ENCODE measurements at regions of chr6 and their contacts with region 1.

Region 1: GRCh38 chr6:142946181-142946923 is 1.4 kb upstream of the HIVEP2 start:
- DNase-seq: peak; percentile 93
- ATAC-seq: peak; percentile 28
- H3K4me3 ChIP-seq: peak overlapping the region; percentile 85 to 96 (median 90)
- H3K4me3 Mint-ChIP-seq: peak overlapping the region; percentile 99
- H3K27ac ChIP-seq: peak overlapping the region; percentile 100
- H3K27ac Mint-ChIP-seq: peak overlapping the region; percentile 99
- H3K4me1 ChIP-seq: peaks cover 19 to 29% of the 10 kb centered on the region in 2 donors
- H3K4me1 Mint-ChIP-seq: peaks cover 43% of the 10 kb centered on the region
- H3K27me3 ChIP-seq: no peaks in the 10 kb centered on the region
- H3K27me3 Mint-ChIP-seq: no peaks in the 10 kb centered on the region
- CTCF ChIP-seq: no peak

Region 2: DNA sequence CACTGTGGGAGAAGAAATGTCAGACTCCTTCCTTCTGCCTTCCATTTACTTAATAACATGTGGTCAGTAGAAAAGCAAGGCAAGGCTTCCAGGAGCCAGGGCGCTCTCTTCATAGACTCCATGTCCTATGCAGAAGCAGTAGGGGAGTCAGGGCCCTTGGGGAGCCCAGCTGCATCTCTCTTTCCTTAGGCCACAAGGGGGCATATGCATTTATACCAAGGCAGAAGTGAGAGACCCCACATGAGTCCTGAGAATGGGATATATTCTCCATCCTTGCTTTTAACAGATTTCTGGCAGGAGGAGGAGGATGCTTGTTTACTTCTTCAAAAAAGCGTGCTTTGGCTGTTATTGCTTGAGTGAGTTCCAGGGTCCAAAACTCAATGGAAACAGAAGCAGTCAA is 199.8 kb before region 1 on chr6:
- CTCF ChIA-PET with region 1: interaction called, 7 read pairs
- POLR2A ChIA-PET with region 1: no interaction called
- intact Hi-C with region 1: loop called (anchors 5 kb)
- DNase-seq: peak; percentile 70
- ATAC-seq: peak; percentile 56
- H3K4me3 ChIP-seq: no peak overlapping the region
- H3K4me3 Mint-ChIP-seq: no peak overlapping the region
- H3K27ac ChIP-seq: no peak overlapping the region
- H3K27ac Mint-ChIP-seq: no peak overlapping the region
- H3K4me1 ChIP-seq: peaks cover 0 to 5% of the 10 kb centered on the region in 2 donors
- H3K4me1 Mint-ChIP-seq: peaks cover 17% of the 10 kb centered on the region
- H3K27me3 ChIP-seq: no peaks in the 10 kb centered on the region
- H3K27me3 Mint-ChIP-seq: no peaks in the 10 kb centered on the region
- CTCF ChIP-seq: peak; percentile 69

Region 3: DNA sequence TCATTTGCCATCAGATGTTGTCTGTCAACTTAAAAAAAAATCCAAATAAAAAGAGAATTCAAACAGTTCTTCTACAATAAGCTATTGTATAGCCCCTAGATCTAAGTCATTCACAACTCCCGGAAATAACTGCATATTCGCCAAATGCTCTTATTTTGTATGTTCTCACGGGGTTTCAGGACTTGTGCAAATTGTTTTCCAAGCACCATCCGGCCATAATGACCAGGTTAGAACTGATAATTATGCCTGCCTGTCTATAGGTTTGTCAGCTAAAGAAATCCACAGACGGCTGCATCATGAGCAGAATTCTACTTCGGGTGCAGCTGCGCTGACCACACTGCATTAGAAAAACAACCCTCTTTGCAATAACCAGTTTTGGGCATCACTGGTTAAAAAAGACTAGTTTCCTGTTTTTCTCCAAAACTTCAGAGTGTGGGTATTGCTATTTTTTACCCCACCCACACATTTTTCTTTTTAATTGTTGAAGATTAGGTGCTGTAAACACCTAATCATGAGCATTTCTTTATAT is 89.1 kb before region 1 on chr6:
- CTCF ChIA-PET with region 1: interaction called, 3 read pairs
- POLR2A ChIA-PET with region 1: interaction called, 3 read pairs
- intact Hi-C with region 1: loop called (anchors 1 kb)
- DNase-seq: peak; percentile 61
- ATAC-seq: peak; percentile 67
- H3K4me3 ChIP-seq: peak overlapping the region; percentile 24 to 73 (median 52)
- H3K4me3 Mint-ChIP-seq: peak overlapping the region; percentile 83
- H3K27ac ChIP-seq: peak overlapping the region; percentile 83 to 84
- H3K27ac Mint-ChIP-seq: peak overlapping the region; percentile 94
- H3K4me1 ChIP-seq: peaks cover 69 to 77% of the 10 kb centered on the region in 2 donors
- H3K4me1 Mint-ChIP-seq: peaks cover 81% of the 10 kb centered on the region
- H3K27me3 ChIP-seq: no peaks in the 10 kb centered on the region
- H3K27me3 Mint-ChIP-seq: no peaks in the 10 kb centered on the region
- CTCF ChIP-seq: no peak

Region 4: GRCh38 chr6:142926494-142927270 is 19.7 kb before region 1 on chr6:
- CTCF ChIA-PET with region 1: interaction called, 7 read pairs
- POLR2A ChIA-PET with region 1: interaction called, 21 read pairs
- intact Hi-C with region 1: loop called (anchors 1 kb)
- DNase-seq: peak; percentile 88
- ATAC-seq: peak; percentile 92
- H3K4me3 ChIP-seq: peak overlapping the region; percentile 46 to 94 (median 75)
- H3K4me3 Mint-ChIP-seq: peak overlapping the region; percentile 98
- H3K27ac ChIP-seq: peak overlapping the region; percentile 98
- H3K27ac Mint-ChIP-seq: peak overlapping the region; percentile 96
- H3K4me1 ChIP-seq: peaks cover 16 to 37% of the 10 kb centered on the region in 2 donors
- H3K4me1 Mint-ChIP-seq: peaks cover 49% of the 10 kb centered on the region
- H3K27me3 ChIP-seq: no peaks in the 10 kb centered on the region
- H3K27me3 Mint-ChIP-seq: no peaks in the 10 kb centered on the region
- CTCF ChIP-seq: no peak

Region 5: DNA sequence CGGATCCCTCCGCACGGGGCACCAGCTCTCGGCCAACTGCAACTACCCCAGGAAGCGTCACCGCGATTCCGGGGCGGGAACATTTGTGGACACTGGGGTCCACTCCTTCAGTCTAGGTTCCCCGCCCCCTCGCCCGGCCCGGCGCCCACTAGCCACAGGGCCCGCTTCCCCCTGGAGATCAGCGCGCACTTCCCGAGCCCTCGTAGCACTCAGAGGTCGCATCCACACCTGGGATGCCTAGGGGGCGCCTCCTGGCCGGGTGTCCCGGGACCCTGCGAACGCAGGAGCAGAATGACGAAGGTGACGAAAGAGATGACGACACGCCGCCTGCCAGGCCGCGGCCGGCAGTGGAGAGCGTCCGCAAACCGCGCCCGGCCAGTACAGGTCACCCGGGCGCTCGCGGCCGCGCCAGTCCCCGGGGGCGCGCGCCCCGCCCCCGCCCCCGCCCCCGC is 114.0 kb after region 1 on chr6:
- CTCF ChIA-PET with region 1: no interaction called
- POLR2A ChIA-PET with region 1: interaction called, 4 read pairs
- intact Hi-C with region 1: loop called (anchors 1 kb)
- DNase-seq: peak; percentile 90
- ATAC-seq: peak; percentile 66
- H3K4me3 ChIP-seq: peak overlapping the region; percentile 71 to 88 (median 81)
- H3K4me3 Mint-ChIP-seq: peak overlapping the region; percentile 97
- H3K27ac ChIP-seq: peak overlapping the region; percentile 69 to 80
- H3K27ac Mint-ChIP-seq: peak overlapping the region; percentile 92
- H3K4me1 ChIP-seq: peaks cover 13 to 16% of the 10 kb centered on the region in 2 donors
- H3K4me1 Mint-ChIP-seq: peaks cover 24% of the 10 kb centered on the region
- H3K27me3 ChIP-seq: no peaks in the 10 kb centered on the region
- H3K27me3 Mint-ChIP-seq: peaks cover 3% of the 10 kb centered on the region
- CTCF ChIP-seq: peak; percentile 40

Measured in B cell (primary cell).